Endothelial cell of umbilical vein (primary cell): ENCODE measurements at regions of chr7 and their contacts with region 1.

Region 1: GRCh38 chr7:36967387-36967786 is 243.1 kb upstream of the AOAH start:
- DNase-seq: peak; percentile 72
- H3K4me3 ChIP-seq: no peak overlapping the region
- H3K27ac ChIP-seq: no peak overlapping the region
- H3K4me1 ChIP-seq: peaks cover 19% of the 10 kb centered on the region
- H3K27me3 ChIP-seq: no peaks in the 10 kb centered on the region
- CTCF ChIP-seq: peak; percentile 78 to 86
- POLR2A ChIP-seq: no peak

Region 2: DNA sequence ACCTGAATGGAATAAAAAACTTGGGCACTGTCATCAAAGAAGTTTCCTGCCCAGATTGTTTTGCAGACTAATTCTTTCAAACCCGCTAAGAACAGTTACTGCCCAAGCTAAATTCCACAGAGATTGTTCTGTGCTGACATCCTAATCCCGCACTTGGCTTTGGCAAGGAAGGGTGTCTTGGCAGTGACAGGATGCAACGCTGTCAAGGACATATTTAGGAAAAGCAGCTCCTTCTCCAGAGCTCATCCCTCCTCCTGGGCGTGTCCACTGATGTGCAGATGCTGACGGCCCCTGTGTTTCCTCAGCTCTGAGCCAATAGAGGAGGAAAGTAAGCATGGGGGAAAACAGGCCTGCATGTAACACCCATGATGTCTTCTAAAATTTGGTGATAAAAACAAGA is 740.2 kb before region 1 on chr7:
- CTCF ChIA-PET with region 1: no interaction called
- POLR2A ChIA-PET with region 1: no interaction called
- dilution Hi-C with region 1: no loop called
- intact Hi-C with region 1: no loop called
- DNase-seq: no peak
- H3K4me3 ChIP-seq: no peak overlapping the region
- H3K27ac ChIP-seq: no peak overlapping the region
- H3K4me1 ChIP-seq: no peaks in the 10 kb centered on the region
- H3K27me3 ChIP-seq: peaks cover 0 to 8% of the 10 kb centered on the region in 2 experiments
- CTCF ChIP-seq: no peak
- POLR2A ChIP-seq: no peak

Region 3: DNA sequence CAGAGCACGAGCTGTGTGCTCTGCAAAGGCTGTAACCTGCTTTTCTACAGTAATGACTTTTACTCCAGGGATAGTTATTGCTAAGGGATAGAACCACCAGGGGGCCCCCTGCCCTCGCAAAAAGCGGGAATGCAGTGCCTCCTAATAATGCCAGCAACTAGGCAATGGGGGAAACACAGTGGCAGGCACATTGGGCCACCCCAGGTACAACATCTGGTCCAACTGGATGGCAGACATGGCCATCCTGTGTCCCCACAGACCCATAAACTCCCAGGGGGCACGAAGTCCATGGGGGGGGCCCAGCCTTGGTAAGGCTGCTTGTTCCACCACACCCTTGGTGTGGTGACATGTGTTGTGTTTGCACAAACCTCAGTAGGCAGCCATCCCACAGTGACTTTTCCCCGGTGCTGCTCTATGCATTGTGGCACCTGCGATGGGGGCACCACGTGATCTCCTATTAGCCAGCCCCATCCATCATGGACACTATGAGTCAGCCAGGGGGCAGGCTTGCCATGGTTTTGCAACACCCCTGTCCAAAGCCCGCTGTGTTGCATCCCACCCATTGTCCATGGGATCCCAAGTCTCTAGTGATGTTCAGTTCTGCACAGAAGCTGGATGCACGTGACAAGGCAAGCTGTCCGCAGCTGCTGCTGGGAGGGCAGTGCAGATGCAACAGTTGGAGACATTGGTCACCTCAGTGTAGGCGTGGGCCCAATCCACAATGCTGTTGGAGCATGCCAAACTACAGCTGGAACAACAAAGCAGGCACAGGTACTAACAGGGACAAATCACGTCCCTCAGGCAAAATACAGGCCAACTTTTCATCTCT is 493.7 kb before region 1 on chr7:
- CTCF ChIA-PET with region 1: interaction called, 8 read pairs
- POLR2A ChIA-PET with region 1: no interaction called
- dilution Hi-C with region 1: no loop called
- intact Hi-C with region 1: loop called (anchors 5 kb)
- DNase-seq: peak; percentile 40
- H3K4me3 ChIP-seq: no peak overlapping the region
- H3K27ac ChIP-seq: peak overlapping the region; percentile 54
- H3K4me1 ChIP-seq: peaks cover 22% of the 10 kb centered on the region
- H3K27me3 ChIP-seq: no peaks in the 10 kb centered on the region
- CTCF ChIP-seq: peak; percentile 55 to 57
- POLR2A ChIP-seq: no peak

Region 4: DNA sequence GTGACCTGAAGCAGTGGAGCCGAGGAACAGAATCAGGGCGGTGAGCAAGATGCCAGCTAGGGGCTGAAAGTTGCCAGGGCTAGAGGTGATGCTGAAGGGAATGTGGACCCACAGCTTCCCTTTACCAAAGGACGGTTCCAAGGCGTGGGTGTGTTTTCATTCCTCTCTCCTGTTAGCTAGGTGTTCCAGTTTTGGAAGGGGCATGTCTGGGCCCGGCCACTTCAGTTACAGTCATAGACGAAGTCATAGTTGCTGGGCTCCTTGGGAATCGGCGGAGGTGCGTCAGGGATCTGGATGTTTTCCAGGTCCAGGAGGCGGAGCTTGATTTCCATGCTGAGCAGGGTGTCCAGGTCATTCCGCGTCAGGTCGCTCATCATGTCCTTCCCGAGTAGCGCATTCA is 112.1 kb before region 1 on chr7:
- CTCF ChIA-PET with region 1: no interaction called
- POLR2A ChIA-PET with region 1: no interaction called
- dilution Hi-C with region 1: no loop called
- intact Hi-C with region 1: no loop called
- DNase-seq: no peak
- H3K4me3 ChIP-seq: no peak overlapping the region
- H3K27ac ChIP-seq: no peak overlapping the region
- H3K4me1 ChIP-seq: no peaks in the 10 kb centered on the region
- H3K27me3 ChIP-seq: no peaks in the 10 kb centered on the region
- CTCF ChIP-seq: no peak
- POLR2A ChIP-seq: no peak

Region 5: DNA sequence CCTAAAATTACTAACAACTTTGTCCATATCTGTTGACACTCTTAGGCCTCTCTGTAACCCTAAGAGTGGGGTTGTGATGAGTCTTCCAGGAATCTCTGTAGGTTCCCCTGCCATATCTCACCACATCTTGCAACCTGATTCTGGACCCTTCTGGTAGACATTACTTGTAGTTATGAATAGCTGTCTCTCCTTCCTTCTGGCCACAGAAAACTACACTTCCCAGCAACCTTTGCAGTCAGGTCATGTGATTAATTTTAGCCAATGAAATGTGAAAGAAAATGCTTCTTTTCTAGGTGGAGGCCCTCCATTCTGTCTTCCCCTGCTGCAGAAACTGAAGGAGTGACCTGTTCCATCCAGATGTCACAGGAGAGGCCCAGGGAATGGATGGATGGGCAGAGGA is 95.5 kb before region 1 on chr7:
- CTCF ChIA-PET with region 1: no interaction called
- POLR2A ChIA-PET with region 1: no interaction called
- dilution Hi-C with region 1: no loop called
- intact Hi-C with region 1: no loop called
- DNase-seq: peak; percentile 18
- H3K4me3 ChIP-seq: no peak overlapping the region
- H3K27ac ChIP-seq: no peak overlapping the region
- H3K4me1 ChIP-seq: no peaks in the 10 kb centered on the region
- H3K27me3 ChIP-seq: no peaks in the 10 kb centered on the region
- CTCF ChIP-seq: no peak
- POLR2A ChIP-seq: no peak

Region 6: GRCh38 chr7:36986429-36987362 is 19.3 kb after region 1 on chr7:
- CTCF ChIA-PET with region 1: interaction called, 191 read pairs
- POLR2A ChIA-PET with region 1: no interaction called
- dilution Hi-C with region 1: no loop called
- intact Hi-C with region 1: loop called (anchors 2 kb)
- DNase-seq: peak; percentile 54
- H3K4me3 ChIP-seq: no peak overlapping the region
- H3K27ac ChIP-seq: no peak overlapping the region
- H3K4me1 ChIP-seq: no peaks in the 10 kb centered on the region
- H3K27me3 ChIP-seq: no peaks in the 10 kb centered on the region
- CTCF ChIP-seq: peak; percentile 86 to 92
- POLR2A ChIP-seq: no peak

Region 7: GRCh38 chr7:37007268-37007667 is 39.9 kb after region 1 on chr7:
- CTCF ChIA-PET with region 1: interaction called, 13 read pairs
- POLR2A ChIA-PET with region 1: no interaction called
- dilution Hi-C with region 1: no loop called
- intact Hi-C with region 1: no loop called
- DNase-seq: no peak
- H3K4me3 ChIP-seq: no peak overlapping the region
- H3K27ac ChIP-seq: no peak overlapping the region
- H3K4me1 ChIP-seq: no peaks in the 10 kb centered on the region
- H3K27me3 ChIP-seq: no peaks in the 10 kb centered on the region
- CTCF ChIP-seq: no peak
- POLR2A ChIP-seq: no peak

Region 8: DNA sequence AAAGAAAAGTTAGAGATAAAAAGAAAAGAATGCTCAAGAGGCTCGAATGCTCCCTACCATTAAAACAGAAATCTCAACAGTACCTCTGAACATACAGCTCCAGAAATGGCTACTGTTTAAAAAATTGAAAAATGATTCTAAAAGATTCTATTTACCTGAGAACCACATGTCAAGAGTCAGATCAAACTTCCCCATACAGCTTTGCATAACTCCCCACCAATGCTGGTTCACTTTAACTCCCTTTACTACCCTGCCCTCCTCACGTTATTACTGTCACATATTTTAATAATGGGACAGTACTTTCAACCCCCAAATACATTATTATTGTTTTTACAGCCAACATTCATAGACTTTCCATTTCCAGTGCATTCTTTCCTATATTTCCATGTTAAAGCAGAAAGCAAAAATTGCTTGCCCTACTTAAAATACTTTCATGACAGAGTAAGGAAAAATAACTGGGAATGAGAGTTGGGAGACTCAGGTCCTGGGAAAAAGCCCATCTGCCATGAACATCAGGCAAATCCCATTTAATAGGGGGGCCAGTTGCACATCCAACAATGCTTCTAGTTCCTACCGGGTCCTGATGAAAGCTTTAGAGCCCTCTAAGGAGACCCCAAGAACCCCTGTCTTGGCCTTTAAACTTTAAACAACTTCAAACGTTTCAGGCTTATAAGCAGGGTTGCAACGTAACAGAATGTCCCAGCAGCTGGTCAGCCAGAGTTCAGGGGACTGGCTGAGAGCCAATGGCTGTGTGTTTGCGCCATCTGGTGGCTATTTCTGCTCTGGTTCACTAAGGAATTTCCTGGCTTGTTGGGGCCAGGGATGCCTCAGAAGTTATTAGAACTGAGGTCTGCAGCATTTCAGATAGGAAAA is 233.9 kb after region 1 on chr7:
- CTCF ChIA-PET with region 1: interaction called, 142 read pairs
- POLR2A ChIA-PET with region 1: no interaction called
- dilution Hi-C with region 1: no loop called
- intact Hi-C with region 1: loop called (anchors 1 kb)
- DNase-seq: peak; percentile 87
- H3K4me3 ChIP-seq: no peak overlapping the region
- H3K27ac ChIP-seq: no peak overlapping the region
- H3K4me1 ChIP-seq: peaks cover 3% of the 10 kb centered on the region
- H3K27me3 ChIP-seq: no peaks in the 10 kb centered on the region
- CTCF ChIP-seq: peak; percentile 79 to 90
- POLR2A ChIP-seq: no peak

Region 9: GRCh38 chr7:37495574-37496184 is 528.3 kb after region 1 on chr7:
- CTCF ChIA-PET with region 1: no interaction called
- POLR2A ChIA-PET with region 1: no interaction called
- dilution Hi-C with region 1: no loop called
- intact Hi-C with region 1: no loop called
- DNase-seq: peak; percentile 52
- H3K4me3 ChIP-seq: no peak overlapping the region
- H3K27ac ChIP-seq: no peak overlapping the region
- H3K4me1 ChIP-seq: no peaks in the 10 kb centered on the region
- H3K27me3 ChIP-seq: no peaks in the 10 kb centered on the region
- CTCF ChIP-seq: peak; percentile 42 to 57
- POLR2A ChIP-seq: no peak